ENCODE measurements at regions of chr11 and their contacts with region 1.

Region 1: DNA sequence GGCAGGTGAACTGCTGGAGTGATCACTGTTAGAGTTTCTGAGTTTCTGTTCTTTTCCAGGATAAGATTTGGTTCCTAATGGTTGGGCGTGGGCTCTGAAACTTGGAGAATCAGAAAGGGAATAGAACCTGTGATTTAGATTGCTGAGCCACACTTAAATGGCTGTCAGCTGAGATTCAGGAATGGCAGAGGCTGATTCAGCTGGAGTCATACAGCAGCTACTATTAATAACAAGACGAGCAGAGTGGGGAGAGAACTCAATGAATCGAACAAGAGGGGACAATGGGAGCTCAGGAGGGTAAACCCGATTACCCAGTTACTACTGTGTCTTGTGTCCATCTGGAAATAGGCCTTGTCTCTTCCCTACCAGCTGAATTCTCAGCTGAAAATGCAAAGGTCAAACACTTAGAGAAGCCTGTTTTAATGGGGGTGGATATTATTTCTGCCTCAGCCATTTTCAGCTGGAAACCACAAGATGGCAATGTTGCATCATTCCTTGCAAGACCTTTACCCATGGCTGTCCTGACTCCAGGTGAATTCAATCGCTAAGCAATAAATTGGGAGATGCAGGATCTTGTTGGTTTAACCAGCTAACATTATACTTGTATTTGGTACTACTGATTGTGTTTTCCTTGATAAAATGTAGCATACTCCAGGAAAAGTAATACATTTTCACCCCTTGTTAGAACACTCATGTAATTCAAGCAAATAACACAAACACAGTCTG is 104.5 kb upstream of the RAG2 start:
- DNase-seq: peak; percentile 46
- H3K4me3 Mint-ChIP-seq: no peak overlapping the region
- H3K27ac Mint-ChIP-seq: no peak overlapping the region
- H3K4me1 Mint-ChIP-seq: peaks cover 9% of the 10 kb centered on the region
- H3K27me3 Mint-ChIP-seq: peaks cover 5% of the 10 kb centered on the region
- CTCF ChIP-seq: peak; percentile 49

Region 2: DNA sequence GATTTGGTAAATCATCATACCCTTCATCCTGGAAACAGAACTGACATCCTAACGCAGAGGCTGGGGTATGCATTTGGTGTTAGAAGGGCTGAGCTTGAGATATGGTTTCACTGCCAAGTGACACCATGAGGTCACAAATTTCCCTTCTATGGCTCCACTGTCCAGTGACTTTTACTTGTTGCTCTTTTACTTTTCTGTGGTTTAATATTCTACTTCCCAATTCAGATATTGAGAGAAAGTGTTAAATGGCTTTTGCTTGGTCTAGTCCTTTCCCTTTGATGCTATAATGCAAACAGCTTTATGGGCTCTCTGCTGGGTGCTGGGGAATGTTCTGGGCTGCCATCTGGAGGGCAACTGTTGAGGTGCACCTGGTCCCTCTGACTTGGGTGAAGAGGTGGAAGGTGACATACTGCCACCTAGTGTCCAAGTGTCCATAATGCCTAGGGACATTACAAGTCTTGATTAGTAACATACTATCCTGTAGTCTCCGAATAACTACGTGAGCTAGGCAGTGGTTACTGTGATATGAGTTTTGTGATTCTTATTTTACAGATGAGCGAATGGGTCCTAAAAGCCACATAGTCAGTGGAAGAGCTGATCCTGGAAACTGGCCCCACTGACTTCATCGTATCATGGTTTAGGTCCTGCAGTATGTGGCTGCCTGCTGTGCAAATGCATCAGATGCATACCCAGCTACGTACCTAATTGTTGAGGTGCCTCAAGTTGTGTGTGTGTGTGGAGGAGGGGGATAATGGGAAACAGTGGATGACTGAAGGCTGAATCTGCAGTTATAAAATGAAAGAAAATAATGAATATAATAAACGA is 44.6 kb after region 1 on chr11:
- CTCF ChIA-PET with region 1: interaction called, 56 read pairs
- intact Hi-C with region 1: loop called (anchors 1 kb)
- DNase-seq: peak; percentile 91
- H3K4me3 Mint-ChIP-seq: no peak overlapping the region
- H3K27ac Mint-ChIP-seq: no peak overlapping the region
- H3K4me1 Mint-ChIP-seq: peaks cover 11% of the 10 kb centered on the region
- H3K27me3 Mint-ChIP-seq: no peaks in the 10 kb centered on the region
- CTCF ChIP-seq: peak; percentile 95

Region 3: GRCh38 chr11:36930256-36930655 is 227.8 kb after region 1 on chr11:
- CTCF ChIA-PET with region 1: no interaction called
- intact Hi-C with region 1: loop called (anchors 10 kb)
- DNase-seq: no peak
- H3K4me3 Mint-ChIP-seq: no peak overlapping the region
- H3K27ac Mint-ChIP-seq: no peak overlapping the region
- H3K4me1 Mint-ChIP-seq: no peaks in the 10 kb centered on the region
- H3K27me3 Mint-ChIP-seq: no peaks in the 10 kb centered on the region
- CTCF ChIP-seq: no peak

Region 4: DNA sequence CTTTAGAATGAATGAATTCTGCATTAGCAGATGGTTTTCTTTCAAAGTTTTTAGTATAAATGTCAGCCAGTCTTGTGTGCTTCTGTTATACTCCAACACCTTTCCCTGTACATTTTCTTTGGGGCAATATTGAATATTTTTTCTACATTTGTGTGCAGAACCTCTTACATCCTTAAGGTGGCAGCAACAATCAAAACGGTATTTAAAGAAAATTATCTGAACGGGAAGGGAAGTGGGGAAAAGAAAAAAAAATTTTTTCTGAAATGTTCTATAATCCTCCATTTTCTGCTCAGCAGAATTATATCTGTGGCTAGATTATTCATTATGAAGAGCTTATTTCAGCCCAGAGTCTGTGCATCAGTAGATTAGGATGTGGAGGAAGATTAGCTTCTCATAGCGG is 242.9 kb after region 1 on chr11:
- CTCF ChIA-PET with region 1: no interaction called
- intact Hi-C with region 1: no loop called
- DNase-seq: no peak
- H3K4me3 Mint-ChIP-seq: no peak overlapping the region
- H3K27ac Mint-ChIP-seq: no peak overlapping the region
- H3K4me1 Mint-ChIP-seq: no peaks in the 10 kb centered on the region
- H3K27me3 Mint-ChIP-seq: no peaks in the 10 kb centered on the region
- CTCF ChIP-seq: peak; percentile 20